ENCODE measurements at regions of chr1 and their contacts with region 1.

Region 1: GRCh38 chr1:6052543-6053205 is 7.0 kb downstream of the KCNAB2 start:
- DNase-seq: peak; percentile 49 to 68
- ATAC-seq: no peak
- H3K4me3 ChIP-seq: no peak overlapping the region
- H3K27ac ChIP-seq: no peak overlapping the region
- H3K4me1 ChIP-seq: no peaks in the 10 kb centered on the region
- H3K27me3 ChIP-seq: peaks cover 0 to 2% (median 0%) of the 10 kb centered on the region in 3 donors
- CTCF ChIP-seq: peak; percentile 37

Region 2: DNA sequence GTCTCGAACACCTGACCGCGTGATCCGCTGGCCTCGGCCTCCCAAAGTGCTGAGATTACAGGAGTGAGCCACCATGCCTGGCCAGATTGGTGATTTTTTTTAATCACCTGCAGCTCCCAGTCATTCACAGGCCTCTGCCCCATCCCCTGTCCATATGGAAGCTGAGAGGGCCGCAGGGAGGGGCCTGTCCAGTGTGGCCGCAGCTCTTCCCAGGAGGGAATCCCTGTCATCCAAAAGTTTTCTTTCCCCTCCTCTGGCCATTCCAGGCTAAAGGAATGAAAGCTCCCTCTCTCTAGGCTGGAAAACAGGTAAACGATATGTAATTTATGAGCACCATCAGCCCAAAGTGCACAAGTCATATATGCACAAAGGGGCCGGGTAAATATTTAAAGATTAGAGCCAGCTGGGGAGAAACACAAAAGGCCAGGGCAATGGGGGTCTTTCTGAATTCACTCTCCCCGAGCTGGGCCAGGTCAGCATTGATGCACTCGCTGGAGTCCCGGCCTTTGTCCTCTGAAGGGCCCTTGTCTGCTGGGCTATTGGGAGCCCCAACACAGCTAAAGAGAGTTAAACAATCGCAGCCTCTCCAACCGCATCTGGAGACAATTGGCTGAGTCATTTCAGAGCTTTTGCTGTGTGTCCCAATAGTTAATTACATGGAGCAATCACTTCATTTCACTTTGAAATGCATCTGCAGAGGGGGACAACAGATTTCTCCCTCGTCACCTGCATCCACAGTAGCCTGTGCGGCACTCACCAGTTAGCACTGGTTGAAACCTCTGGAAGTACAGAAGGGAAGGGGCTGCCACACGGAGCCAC is 187.5 kb after region 1 on chr1:
- intact Hi-C with region 1: loop called (anchors 2 to 5 kb)
- DNase-seq: peak in 1 of 2 donors; percentile 23
- ATAC-seq: no peak
- H3K4me3 ChIP-seq: no peak overlapping the region
- H3K27ac ChIP-seq: no peak overlapping the region
- H3K4me1 ChIP-seq: peaks cover 6% of the 10 kb centered on the region
- H3K27me3 ChIP-seq: peaks cover 0 to 51% (median 15%) of the 10 kb centered on the region in 3 donors
- CTCF ChIP-seq: no peak

Region 3: DNA sequence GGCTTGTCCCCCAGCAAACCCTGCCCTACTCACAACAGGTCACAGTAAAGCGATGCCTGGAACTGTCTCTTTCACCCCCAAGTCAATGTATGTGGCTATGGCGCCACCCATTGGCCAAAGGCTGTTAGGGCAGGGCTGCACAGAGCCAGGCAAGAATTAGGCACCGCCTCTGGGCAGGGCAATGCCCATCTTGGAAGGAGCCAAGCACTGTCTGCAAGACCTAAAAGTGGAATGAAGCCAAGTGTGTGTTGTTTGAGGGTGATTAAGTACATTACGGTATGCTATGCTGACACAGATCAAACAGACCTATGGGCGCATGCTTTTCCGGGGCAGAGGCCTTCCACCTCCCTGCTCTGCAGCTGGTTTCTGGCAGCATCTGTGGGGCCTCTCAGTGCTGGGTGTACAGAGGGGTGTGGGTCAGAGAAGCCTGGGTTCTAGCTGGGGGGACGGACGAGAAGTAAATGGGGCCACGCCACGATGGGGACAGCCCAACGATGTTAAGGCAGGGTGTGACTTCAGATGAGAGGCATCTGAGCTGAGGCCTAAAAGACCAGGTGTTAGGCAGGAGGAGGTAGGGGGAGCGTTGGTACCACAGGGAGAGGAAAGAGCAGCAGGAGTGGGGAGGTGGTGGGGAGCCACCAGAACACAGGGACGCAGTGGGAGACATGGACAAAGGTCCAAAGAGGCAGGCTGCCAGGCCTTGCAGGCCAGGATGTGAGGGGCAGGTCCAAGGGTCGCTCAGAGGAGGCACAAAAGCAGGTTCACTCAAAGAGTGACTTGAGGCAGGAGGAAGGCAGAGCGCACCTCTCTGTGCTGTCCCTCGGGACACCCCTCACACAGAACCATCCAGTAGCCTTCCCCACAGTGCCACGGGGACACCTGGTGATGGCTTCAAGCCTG is 291.1 kb after region 1 on chr1:
- intact Hi-C with region 1: loop called in 1 of 2 experiments (anchors 5 kb)
- DNase-seq: peak; percentile 69 to 80
- ATAC-seq: peak; percentile 83 to 90 (median 88)
- H3K4me3 ChIP-seq: no peak overlapping the region
- H3K27ac ChIP-seq: no peak overlapping the region
- H3K4me1 ChIP-seq: no peaks in the 10 kb centered on the region
- H3K27me3 ChIP-seq: no peaks in the 10 kb centered on the region
- CTCF ChIP-seq: peak; percentile 90

Measured in psoas muscle (tissue), 8 donors.